Left ventricle myocardium superior (tissue), 1 donor: ENCODE measurements at regions of chr5 and their contacts with region 1.

Region 1: GRCh38 chr5:172187096-172188032 is 660 bp downstream of the STK10 start:
- DNase-seq: peak; percentile 78
- ATAC-seq: peak; percentile 23

Region 2: GRCh38 chr5:172104021-172104420 is 83.3 kb before region 1 on chr5:
- intact Hi-C with region 1: loop called (anchors 2 kb)
- DNase-seq: no peak
- ATAC-seq: peak; percentile 20